ENCODE measurements at regions of chr6 and their contacts with region 1.

Region 1: GRCh38 chr6:144215932-144216667 is 65.8 kb downstream of the STX11 start:
- DNase-seq: peak; percentile 94
- ATAC-seq: peak; percentile 95

Region 2: GRCh38 chr6:144265390-144265789 is 49.3 kb after region 1 on chr6:
- intact Hi-C with region 1: loop called (anchors 10 kb)
- DNase-seq: no peak
- ATAC-seq: peak; percentile 49

Measured in left ventricle myocardium superior (tissue), 1 donor.